Right ventricle myocardium superior (tissue), 1 donor: ENCODE measurements at regions of chr21 and their contacts with region 1.

Region 1: GRCh38 chr21:31580866-31581276 is 78.6 kb upstream of the SOD1 start:
- DNase-seq: peak; percentile 76
- ATAC-seq: peak; percentile 77

Region 2: DNA sequence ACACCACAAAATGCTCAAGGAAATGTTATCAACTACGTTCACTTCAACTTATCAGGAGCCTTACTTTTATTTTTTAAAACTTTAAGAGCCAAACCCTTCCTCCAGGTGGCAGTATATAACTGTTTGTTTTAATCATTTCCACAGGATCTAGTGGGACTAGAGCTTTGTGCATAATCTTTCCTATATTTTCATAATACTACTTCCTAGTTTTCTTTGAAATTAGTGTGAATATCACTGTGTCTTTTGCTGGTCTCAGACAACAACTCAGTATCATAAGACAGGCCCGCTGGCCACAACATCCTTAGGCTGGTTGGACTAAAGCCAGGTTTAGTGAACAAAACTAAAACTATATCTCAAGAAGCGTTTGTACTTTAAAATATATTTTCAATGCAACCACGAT is 382.3 kb before region 1 on chr21:
- intact Hi-C with region 1: loop called (anchors 5 kb)
- DNase-seq: no peak
- ATAC-seq: peak; percentile 53

Region 3: GRCh38 chr21:31282095-31282709 is 298.7 kb before region 1 on chr21:
- intact Hi-C with region 1: no loop called
- DNase-seq: peak; percentile 43
- ATAC-seq: peak; percentile 79

Region 4: GRCh38 chr21:31293986-31294385 is 286.9 kb before region 1 on chr21:
- intact Hi-C with region 1: no loop called
- DNase-seq: no peak
- ATAC-seq: no peak

Region 5: GRCh38 chr21:32329331-32329730 is 748.5 kb after region 1 on chr21:
- intact Hi-C with region 1: no loop called
- DNase-seq: no peak
- ATAC-seq: no peak